Naive thymus-derived CD4-positive, alpha-beta T cell (primary cell): ENCODE measurements at regions of chr15 and their contacts with region 1.

Region 1: DNA sequence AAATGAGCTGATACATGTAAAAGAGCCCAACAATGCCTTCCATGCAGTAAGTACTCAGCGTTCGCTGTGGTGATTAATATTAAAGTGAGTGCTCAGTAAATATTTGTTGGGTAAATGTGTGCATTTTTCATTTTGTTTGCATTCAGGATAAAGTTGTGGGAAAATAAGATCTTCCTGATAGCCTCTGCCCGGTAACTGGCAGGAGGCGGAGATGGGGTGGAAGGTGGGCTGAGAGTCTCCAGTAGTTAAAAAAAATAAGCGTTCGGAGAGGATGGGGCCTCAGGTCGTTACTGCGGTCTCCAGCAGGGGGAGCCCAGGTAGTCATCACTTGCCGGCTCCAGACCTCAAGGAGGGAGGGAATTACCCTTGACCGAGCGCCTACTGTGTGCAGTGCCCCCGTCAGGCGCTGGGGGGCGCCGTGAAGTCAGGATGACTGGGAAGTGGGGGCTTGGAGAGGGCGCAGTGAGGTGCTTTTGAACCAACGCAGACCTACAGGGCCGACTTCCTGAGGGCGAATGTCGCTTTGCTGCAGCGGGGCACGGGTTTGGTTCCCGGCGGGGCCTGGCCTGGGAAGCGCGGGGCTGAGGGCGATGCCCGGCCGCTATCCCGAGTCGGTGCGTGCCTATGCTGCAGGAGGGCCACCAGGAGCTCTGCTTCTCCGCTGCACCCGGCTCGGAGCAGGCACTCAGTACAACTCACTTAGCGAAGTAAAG is 80.1 kb downstream of the RHCG start:
- DNase-seq: peak; percentile 22 to 76 (median 39)
- ATAC-seq: peak; percentile 94
- H3K4me3 ChIP-seq: no peak overlapping the region
- H3K4me3 Mint-ChIP-seq: peak overlapping the region in 3 of 10 donors; percentile 27 to 72 (median 36)
- H3K27ac ChIP-seq: no peak overlapping the region
- H3K27ac Mint-ChIP-seq: peak overlapping the region in 1 of 9 donors; percentile 23
- H3K4me1 ChIP-seq: peaks cover 0 to 4% of the 10 kb centered on the region in 2 donors
- H3K4me1 Mint-ChIP-seq: peaks cover 9 to 14% (median 11%) of the 10 kb centered on the region in 7 donors
- H3K27me3 ChIP-seq: peaks cover 15 to 32% of the 10 kb centered on the region in 2 donors
- H3K27me3 Mint-ChIP-seq: peaks cover 77 to 89% (median 85%) of the 10 kb centered on the region in 5 donors

Region 2: DNA sequence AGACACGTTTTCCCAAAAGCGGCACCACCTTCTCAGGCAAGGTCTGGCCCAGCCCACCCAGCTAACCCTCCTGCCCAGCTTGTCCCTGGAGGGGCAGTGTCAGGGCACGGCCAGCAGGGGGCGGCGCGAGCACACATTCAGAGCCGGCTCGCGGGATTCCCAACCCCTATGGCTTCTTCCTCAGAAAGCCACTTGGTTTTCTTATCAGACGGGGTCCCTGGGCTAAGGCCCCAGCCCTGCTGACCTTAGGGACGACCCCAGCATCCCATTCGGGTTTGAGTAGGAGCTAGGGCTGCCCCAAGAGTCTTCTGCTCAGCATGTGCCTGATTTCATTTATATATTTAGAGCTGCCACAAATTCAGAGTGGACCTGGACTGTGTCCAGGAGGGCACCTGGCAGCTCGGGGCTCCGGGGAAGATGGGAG is 209.4 kb before region 1 on chr15:
- CTCF ChIA-PET with region 1: no interaction called
- POLR2A ChIA-PET with region 1: no interaction called
- intact Hi-C with region 1: no loop called
- DNase-seq: peak; percentile 38 to 82 (median 61)
- ATAC-seq: peak; percentile 88
- H3K4me3 ChIP-seq: peak overlapping the region; percentile 24
- H3K4me3 Mint-ChIP-seq: peak overlapping the region in 2 of 10 donors; percentile 20 to 59
- H3K27ac ChIP-seq: no peak overlapping the region
- H3K27ac Mint-ChIP-seq: peak overlapping the region in 1 of 9 donors; percentile 28
- H3K4me1 ChIP-seq: peaks cover 0 to 11% of the 10 kb centered on the region in 2 donors
- H3K4me1 Mint-ChIP-seq: peaks cover 7 to 37% (median 27%) of the 10 kb centered on the region in 7 donors
- H3K27me3 ChIP-seq: no peaks in the 10 kb centered on the region
- H3K27me3 Mint-ChIP-seq: peaks cover 0 to 7% (median 0%) of the 10 kb centered on the region in 5 donors

Region 3: GRCh38 chr15:89399238-89400120 is 16.8 kb before region 1 on chr15:
- CTCF ChIA-PET with region 1: no interaction called
- POLR2A ChIA-PET with region 1: no interaction called
- intact Hi-C with region 1: no loop called
- DNase-seq: peak in 1 of 9 donors; percentile 47
- ATAC-seq: peak; percentile 36
- H3K4me3 ChIP-seq: peak overlapping the region; percentile 58
- H3K4me3 Mint-ChIP-seq: peak overlapping the region; percentile 56 to 80 (median 74)
- H3K27ac ChIP-seq: no peak overlapping the region
- H3K27ac Mint-ChIP-seq: no peak overlapping the region
- H3K4me1 ChIP-seq: peaks cover 3 to 6% of the 10 kb centered on the region in 2 donors
- H3K4me1 Mint-ChIP-seq: peaks cover 6 to 22% (median 15%) of the 10 kb centered on the region in 7 donors
- H3K27me3 ChIP-seq: peaks cover 6 to 31% of the 10 kb centered on the region in 2 donors
- H3K27me3 Mint-ChIP-seq: peaks cover 49 to 81% (median 65%) of the 10 kb centered on the region in 5 donors

Region 4: DNA sequence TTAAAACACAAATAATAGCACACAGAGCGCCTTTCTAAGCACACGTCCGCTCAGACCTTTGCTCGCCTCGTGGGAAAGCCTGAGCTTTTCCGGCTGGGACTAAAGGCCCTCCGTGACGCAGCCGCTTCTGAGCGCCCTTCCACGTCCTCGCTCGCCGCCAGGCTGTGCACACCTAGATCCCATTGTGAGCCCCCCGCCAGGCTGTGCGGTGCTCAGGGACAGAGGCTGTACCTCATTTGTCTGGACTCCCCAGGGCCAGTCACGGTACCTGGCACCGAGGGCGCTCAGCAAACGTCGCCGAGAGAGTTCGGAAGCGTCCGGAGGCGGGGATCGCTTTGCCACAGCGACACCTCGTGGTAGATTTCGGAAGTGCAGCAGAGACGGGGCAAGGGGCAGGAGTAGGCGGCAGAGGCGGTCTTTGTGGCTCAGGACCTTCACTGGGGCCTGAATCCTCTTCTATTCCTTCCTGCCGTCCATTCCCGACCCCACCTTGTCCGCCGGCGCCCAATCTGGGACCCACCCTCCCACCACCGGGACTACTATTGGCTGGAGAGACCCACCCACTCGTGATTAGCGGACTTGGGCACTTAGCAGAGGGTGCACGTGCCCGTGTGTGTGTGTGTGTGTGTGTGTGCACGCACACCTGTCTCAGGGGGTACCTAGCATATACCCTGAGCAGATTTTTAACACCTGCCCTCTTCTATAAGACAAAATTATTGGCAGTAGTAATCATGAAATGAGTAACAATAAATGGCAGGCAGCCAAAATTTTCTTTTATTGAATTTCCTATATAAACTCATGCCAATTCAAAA is 14.4 kb after region 1 on chr15:
- CTCF ChIA-PET with region 1: interaction called, 3 read pairs
- POLR2A ChIA-PET with region 1: no interaction called
- intact Hi-C with region 1: loop called (anchors 1 kb)
- DNase-seq: peak; percentile 54 to 96 (median 79)
- ATAC-seq: peak; percentile 94
- H3K4me3 ChIP-seq: peak overlapping the region; percentile 49
- H3K4me3 Mint-ChIP-seq: peak overlapping the region; percentile 64 to 89 (median 84)
- H3K27ac ChIP-seq: no peak overlapping the region
- H3K27ac Mint-ChIP-seq: peak overlapping the region in 3 of 9 donors; percentile 62 to 78 (median 71)
- H3K4me1 ChIP-seq: no peaks in the 10 kb centered on the region
- H3K4me1 Mint-ChIP-seq: peaks cover 3 to 10% (median 6%) of the 10 kb centered on the region in 7 donors
- H3K27me3 ChIP-seq: no peaks in the 10 kb centered on the region
- H3K27me3 Mint-ChIP-seq: peaks cover 17 to 27% (median 20%) of the 10 kb centered on the region in 5 donors

Region 5: GRCh38 chr15:89936051-89936785 is 519.9 kb after region 1 on chr15:
- CTCF ChIA-PET with region 1: no interaction called
- POLR2A ChIA-PET with region 1: no interaction called
- intact Hi-C with region 1: no loop called
- DNase-seq: peak in 8 of 9 donors; percentile 22 to 60 (median 47)
- ATAC-seq: peak; percentile 80
- H3K4me3 ChIP-seq: no peak overlapping the region
- H3K4me3 Mint-ChIP-seq: peak overlapping the region in 9 of 10 donors; percentile 2 to 51 (median 28)
- H3K27ac ChIP-seq: no peak overlapping the region
- H3K27ac Mint-ChIP-seq: peak overlapping the region in 5 of 9 donors; percentile 0 to 29 (median 13)
- H3K4me1 ChIP-seq: peaks cover 6 to 11% of the 10 kb centered on the region in 2 donors
- H3K4me1 Mint-ChIP-seq: peaks cover 14 to 29% (median 17%) of the 10 kb centered on the region in 7 donors
- H3K27me3 ChIP-seq: no peaks in the 10 kb centered on the region
- H3K27me3 Mint-ChIP-seq: peaks cover 0 to 31% (median 0%) of the 10 kb centered on the region in 5 donors